GM10248 (cell line): ENCODE measurements at regions of chr5 and their contacts with region 1.

Region 1: GRCh38 chr5:66193419-66193818 is 49.3 kb downstream of the SREK1 start:
- DNase-seq: no peak
- CTCF ChIP-seq: no peak

Region 2: GRCh38 chr5:66164044-66164790 is 29.2 kb before region 1 on chr5:
- CTCF ChIA-PET with region 1: no interaction called
- POLR2A ChIA-PET with region 1: no interaction called
- DNase-seq: no peak
- CTCF ChIP-seq: no peak

Region 3: DNA sequence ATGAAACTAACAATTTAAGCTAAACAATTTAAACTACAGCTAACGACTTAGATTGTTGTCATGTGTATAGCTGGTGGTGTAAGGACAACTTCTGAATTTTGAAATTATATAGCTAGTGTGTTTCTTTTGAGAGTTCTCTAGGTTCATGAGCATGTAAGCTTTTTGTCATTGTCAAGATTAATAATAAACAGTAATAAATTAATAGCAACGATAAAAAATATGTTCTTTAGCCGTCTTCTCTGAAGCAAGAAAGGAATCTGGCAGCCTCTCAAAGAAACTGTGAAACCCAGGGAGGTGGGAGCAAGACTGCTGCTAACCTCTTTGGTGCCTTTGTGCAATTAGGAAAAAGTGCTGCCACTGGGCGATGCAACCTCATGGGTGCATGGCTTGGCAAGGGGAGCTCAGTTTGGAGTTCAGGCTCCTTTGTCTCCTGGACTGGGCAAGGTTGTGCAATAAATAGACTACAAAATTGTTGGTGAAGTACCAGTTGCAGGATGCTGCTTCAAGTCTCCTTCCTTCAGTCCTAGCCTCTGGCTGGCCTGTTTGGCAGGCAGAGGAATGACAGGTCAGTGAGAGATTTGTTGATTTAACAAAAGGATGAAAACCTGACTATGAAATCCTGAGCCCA is 10.2 kb after region 1 on chr5:
- CTCF ChIA-PET with region 1: interaction called, 19 read pairs
- POLR2A ChIA-PET with region 1: no interaction called
- DNase-seq: no peak
- CTCF ChIP-seq: no peak